ENCODE measurements at regions of chr5 and their contacts with region 1.

Region 1: GRCh38 chr5:78899922-78900362 is 85.2 kb downstream of the ARSB start:
- DNase-seq: no peak

Region 2: DNA sequence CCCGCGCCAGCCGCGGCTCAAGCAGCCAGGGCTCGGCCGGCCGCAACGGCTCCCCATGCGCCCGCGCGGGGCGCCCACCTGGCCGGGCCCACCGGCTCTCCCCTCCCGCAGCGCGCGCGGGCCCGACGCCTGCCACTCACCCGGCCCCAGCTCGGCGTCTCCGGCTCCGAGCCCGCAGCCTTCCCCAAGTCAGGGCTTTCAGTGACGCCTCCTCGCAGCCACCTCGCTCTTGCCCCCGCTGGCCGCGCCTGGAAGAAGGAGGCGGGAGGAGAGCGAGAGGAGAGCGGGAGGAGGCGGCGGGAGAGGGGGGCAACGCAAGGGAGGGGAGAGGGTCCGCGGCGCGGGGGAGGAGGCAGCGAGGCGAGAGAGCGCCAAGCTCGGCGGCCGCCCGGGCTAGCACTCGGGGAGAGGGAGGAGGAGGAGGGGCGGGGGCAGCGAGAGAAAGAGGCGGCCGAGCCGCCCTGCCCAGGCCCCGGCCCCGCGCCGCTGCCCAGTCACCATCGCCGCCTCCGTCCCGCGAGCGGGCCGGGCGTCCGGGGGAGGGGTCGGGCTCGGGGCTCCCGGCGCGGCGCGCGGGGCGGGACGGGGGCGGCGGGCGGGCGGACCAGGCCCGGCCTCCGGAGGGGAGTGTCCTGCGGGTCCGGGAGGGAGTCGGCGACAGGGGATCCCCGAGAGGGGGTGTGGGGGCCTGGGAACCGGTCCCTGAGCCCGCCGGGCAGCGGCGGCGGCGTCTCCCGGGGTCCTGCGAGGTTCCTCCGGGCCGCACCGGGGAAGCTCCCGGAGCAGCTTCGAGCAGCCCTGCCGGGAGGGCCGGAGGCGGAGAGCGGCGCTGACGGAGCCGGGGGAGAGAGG is 251.4 kb before region 1 on chr5 and contains the start of gene LHFPL2:
- intact Hi-C with region 1: loop called in 1 of 2 experiments (anchors 10 kb)
- DNase-seq: peak; percentile 93
- total RNA-seq, gene LHFPL2: 34.9 to 44.4 TPM

Measured in posterior vena cava (tissue), 2 donors.